Left ventricle myocardium superior (tissue), 1 donor: ENCODE measurements at regions of chr1 and their contacts with region 1.

Region 1: DNA sequence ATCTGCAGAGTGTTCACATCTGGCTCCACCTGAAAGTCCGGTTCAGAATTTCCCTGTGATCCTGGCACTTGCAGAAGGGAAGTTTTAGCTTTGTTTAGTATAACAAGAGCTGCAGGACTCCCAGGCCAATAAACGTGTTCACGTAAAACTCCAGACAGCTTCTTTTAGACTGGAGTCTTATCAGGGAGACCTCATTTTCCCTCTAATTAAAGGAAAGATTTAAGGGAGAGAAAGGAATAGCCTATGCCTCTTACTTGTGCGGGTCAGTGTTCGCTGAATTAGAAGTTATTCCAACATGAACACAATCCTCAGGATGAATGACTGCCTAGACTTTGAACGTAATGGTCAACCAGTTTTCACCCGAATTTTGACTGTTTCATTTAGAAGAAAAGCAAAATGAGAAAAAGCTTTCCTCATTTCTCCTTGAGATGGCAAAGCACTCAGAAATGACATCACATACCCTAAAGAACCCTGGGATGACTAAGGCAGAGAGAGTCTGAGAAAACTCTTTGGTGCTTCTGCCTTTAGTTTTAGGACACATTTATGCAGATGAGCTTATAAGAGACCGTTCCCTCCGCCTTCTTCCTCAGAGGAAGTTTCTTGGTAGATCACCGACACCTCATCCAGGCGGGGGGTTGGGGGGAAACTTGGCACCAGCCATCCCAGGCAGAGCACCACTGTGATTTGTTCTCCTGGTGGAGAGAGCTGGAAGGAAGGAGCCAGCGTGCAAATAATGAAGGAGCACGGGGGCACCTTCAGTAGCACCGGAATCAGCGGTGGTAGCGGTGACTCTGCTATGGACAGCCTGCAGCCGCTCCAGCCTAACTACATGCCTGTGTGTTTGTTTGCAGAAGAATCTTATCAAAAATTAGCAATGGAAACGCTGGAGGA is 202.1 kb upstream of the SGIP1 start:
- DNase-seq: peak; percentile 75
- ATAC-seq: peak; percentile 71

Region 2: DNA sequence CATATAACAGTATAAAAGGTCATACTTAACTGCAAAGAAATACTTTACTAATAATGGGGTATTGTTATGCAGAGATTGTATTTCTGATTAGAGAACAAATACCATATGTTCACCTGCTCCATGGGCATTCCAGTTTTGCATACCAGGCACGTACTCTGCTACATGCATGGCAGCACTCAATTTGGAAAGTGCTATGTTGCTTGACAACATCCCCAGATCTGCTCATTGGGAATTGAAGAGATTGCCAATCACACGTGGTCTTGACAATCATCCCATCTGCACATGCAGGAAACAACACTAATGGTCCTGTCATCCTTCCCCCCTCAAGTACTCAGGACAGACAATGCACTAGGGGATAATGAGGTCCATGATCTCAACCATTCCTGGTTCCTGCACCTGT is 602.6 kb before region 1 on chr1:
- intact Hi-C with region 1: no loop called
- DNase-seq: no peak
- ATAC-seq: no peak

Region 3: DNA sequence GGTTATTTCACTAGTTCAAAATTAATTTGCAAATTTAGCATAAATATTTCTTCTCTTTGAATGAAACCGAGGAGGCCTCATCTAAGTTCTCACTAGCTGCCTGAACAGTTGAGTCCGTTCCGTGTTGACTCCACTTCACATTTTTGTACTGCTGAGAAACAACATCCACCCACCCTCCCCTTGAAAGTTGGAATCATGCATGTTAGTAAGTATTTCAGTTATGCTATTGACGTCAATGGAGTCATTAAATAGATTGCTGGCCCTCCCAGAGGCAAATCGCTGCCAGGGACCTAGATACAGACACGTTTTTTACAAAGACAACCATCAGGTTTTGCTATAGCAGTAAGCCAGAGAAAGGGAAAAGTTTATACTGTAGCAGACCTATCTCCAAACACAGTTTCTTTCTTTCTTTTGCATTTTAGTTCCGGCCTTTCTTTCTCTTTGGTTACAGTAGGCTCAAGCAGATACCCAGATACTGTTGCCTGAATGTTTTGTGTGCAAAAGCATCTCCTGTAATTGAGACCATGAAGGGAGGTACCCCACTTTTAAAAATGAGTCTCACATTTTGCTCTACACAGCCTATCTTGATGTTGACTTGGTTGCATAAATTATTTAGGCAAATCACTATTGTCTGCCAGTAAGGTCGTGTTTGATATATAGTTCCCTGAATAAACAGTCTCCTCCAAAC is 60.5 kb before region 1 on chr1:
- intact Hi-C with region 1: loop called (anchors 5 kb)
- DNase-seq: peak; percentile 83
- ATAC-seq: peak; percentile 93